Caco-2 (cell line): ENCODE measurements at regions of chr9 and their contacts with region 1.

Region 1: GRCh38 chr9:130857864-130858738 is 23.0 kb downstream of the ABL1 start:
- DNase-seq: no peak
- H3K4me3 ChIP-seq: no peak overlapping the region
- H3K4me3 Mint-ChIP-seq: no peak overlapping the region
- H3K27ac Mint-ChIP-seq: no peak overlapping the region
- H3K4me1 ChIP-seq: peaks cover 1% of the 10 kb centered on the region
- H3K4me1 Mint-ChIP-seq: no peaks in the 10 kb centered on the region
- H3K27me3 ChIP-seq: no peaks in the 10 kb centered on the region
- H3K27me3 Mint-ChIP-seq: no peaks in the 10 kb centered on the region
- CTCF ChIP-seq: no peak

Region 2: GRCh38 chr9:130815242-130815808 is 42.8 kb before region 1 on chr9:
- CTCF ChIA-PET with region 1: no interaction called
- POLR2A ChIA-PET with region 1: interaction called, 12 read pairs
- intact Hi-C with region 1: no loop called
- DNase-seq: no peak
- H3K4me3 ChIP-seq: no peak overlapping the region
- H3K4me3 Mint-ChIP-seq: no peak overlapping the region
- H3K27ac Mint-ChIP-seq: no peak overlapping the region
- H3K4me1 ChIP-seq: no peaks in the 10 kb centered on the region
- H3K4me1 Mint-ChIP-seq: no peaks in the 10 kb centered on the region
- H3K27me3 ChIP-seq: no peaks in the 10 kb centered on the region
- H3K27me3 Mint-ChIP-seq: no peaks in the 10 kb centered on the region
- CTCF ChIP-seq: no peak

Region 3: GRCh38 chr9:130830231-130830760 is 27.8 kb before region 1 on chr9:
- CTCF ChIA-PET with region 1: no interaction called
- POLR2A ChIA-PET with region 1: no interaction called
- intact Hi-C with region 1: no loop called
- DNase-seq: no peak
- H3K4me3 ChIP-seq: no peak overlapping the region
- H3K4me3 Mint-ChIP-seq: no peak overlapping the region
- H3K27ac Mint-ChIP-seq: no peak overlapping the region
- H3K4me1 ChIP-seq: peaks cover 18% of the 10 kb centered on the region
- H3K4me1 Mint-ChIP-seq: peaks cover 16% of the 10 kb centered on the region
- H3K27me3 ChIP-seq: no peaks in the 10 kb centered on the region
- H3K27me3 Mint-ChIP-seq: no peaks in the 10 kb centered on the region
- CTCF ChIP-seq: no peak

Region 4: GRCh38 chr9:130962418-130963316 is 104.6 kb after region 1 on chr9:
- CTCF ChIA-PET with region 1: no interaction called
- POLR2A ChIA-PET with region 1: no interaction called
- intact Hi-C with region 1: no loop called
- DNase-seq: no peak
- H3K4me3 ChIP-seq: no peak overlapping the region
- H3K4me3 Mint-ChIP-seq: no peak overlapping the region
- H3K27ac Mint-ChIP-seq: no peak overlapping the region
- H3K4me1 ChIP-seq: no peaks in the 10 kb centered on the region
- H3K4me1 Mint-ChIP-seq: no peaks in the 10 kb centered on the region
- H3K27me3 ChIP-seq: no peaks in the 10 kb centered on the region
- H3K27me3 Mint-ChIP-seq: no peaks in the 10 kb centered on the region
- CTCF ChIP-seq: no peak